Prostate gland (tissue), 2 donors: ENCODE measurements at regions of chr2 and their contacts with region 1.

Region 1: DNA sequence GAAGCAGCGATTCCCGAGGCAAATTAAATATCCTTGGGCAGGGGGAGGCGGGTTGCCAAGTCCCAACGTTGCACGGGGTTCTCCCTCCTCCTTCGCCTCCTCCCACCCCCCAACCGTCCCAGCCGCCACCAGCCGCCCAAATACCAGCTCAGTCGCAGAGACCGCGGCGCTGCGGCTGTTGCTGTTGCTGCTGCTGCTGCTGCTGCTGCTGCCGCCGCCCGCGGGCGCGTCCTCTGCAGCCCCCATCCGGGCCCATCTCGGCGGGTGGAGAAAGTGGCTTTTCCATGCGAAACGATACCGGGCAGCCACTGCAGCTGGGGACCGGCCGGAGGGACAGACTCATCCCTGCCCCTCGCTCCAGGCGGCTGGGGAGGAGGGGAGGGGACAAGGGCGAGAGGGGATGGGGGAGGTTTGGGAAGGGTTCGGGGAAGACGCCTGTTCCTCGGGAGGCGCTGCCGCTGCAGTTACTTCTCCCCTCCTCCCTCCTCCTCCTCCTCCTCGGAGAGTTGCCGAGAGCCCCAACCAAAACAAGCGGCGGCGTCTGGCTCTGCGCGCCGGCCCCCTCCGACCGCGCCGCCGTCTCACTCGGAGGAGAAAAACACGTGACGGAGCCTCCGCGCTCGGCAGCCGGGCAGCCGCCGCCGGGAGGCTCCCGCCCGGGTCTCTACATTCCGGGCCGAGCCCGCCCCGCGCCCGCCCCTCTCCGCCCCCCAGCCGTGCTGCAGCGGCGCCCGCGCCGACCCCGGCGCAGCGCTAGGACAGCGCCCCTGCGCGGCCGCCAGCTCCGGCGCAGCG is at the start of gene IRS1:
- DNase-seq: peak; percentile 70
- H3K4me3 ChIP-seq: peak within 1 kb of the TSS; percentile 52 to 60
- H3K27ac ChIP-seq: peak within 1 kb of the TSS; percentile 92 to 93
- H3K4me1 ChIP-seq: no peaks in the 10 kb centered on the region
- H3K27me3 ChIP-seq: no peaks in the 10 kb centered on the region
- CTCF ChIP-seq: peak in 2 of 4 experiments; percentile 42 to 44
- POLR2A ChIP-seq: peak; percentile 46
- total RNA-seq, gene IRS1: 37.6 to 40.6 TPM

Region 2: DNA sequence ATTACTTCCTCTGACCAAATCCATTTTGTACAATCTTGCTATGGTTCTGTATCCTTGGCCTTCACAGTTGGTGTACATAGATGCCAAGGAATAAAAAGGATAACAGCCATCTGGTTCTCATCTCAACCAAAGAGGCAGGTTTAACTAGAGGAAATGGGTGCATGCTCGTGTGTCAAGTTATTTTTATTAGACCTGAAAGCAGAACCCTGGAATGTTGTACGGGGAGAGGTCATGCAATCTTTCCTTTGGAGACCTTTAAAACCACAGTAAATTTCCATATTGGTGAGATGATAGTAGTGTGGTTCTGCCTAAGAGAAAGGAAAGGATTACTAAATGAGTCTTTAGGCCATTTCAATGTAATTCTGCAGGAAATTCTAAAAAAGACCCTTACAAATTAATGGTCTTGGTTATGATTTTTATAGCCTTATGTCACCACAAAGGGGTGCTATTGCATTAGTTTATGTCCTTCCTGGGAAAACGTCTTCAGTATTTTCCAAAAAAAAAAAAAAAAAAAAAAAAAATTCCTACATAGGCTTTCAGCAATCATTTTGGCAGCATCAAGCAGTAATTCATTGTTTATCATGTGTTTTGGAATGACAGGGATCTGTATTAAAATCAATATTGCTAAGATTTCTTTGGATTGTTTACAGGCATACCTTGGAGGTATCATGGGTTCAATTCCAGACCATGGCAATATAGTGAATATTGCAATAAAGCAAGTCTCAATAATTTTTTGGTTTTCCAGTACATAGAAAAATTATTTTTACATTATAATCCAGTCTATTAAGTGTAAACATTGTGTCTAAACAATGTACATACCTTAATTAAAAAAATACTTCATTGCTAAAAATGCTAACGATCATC is 1129.0 kb before region 1 on chr2:
- intact Hi-C with region 1: loop called (anchors 2 kb)
- DNase-seq: no peak
- H3K4me3 ChIP-seq: no peak overlapping the region
- H3K27ac ChIP-seq: no peak overlapping the region
- H3K4me1 ChIP-seq: no peaks in the 10 kb centered on the region
- H3K27me3 ChIP-seq: no peaks in the 10 kb centered on the region
- CTCF ChIP-seq: peak in 3 of 4 experiments; percentile 35 to 56 (median 36)
- POLR2A ChIP-seq: no peak

Region 3: DNA sequence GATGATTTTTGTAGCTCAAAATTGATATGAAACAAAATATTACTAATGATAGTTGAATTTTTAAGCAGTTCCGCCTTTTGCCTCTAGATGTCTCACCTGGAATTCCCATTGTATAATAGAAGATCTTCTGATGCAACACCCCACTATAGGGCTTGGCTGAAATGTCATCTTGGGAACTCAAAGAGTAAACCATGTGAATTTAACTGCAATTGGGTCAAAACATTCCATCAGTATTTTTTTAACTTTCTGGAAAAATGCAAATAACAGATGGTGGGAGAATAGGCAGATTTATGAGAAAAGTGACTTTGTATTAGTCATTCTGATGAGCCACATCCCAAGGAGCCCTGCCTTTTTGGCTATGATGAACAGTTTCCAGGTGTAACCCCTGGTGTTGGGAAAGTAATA is 909.9 kb before region 1 on chr2:
- intact Hi-C with region 1: loop called (anchors 5 kb)
- DNase-seq: peak; percentile 13
- H3K4me3 ChIP-seq: no peak overlapping the region
- H3K27ac ChIP-seq: no peak overlapping the region
- H3K4me1 ChIP-seq: no peaks in the 10 kb centered on the region
- H3K27me3 ChIP-seq: no peaks in the 10 kb centered on the region
- CTCF ChIP-seq: peak in 3 of 4 experiments; percentile 56 to 86 (median 83)
- POLR2A ChIP-seq: no peak

Region 4: DNA sequence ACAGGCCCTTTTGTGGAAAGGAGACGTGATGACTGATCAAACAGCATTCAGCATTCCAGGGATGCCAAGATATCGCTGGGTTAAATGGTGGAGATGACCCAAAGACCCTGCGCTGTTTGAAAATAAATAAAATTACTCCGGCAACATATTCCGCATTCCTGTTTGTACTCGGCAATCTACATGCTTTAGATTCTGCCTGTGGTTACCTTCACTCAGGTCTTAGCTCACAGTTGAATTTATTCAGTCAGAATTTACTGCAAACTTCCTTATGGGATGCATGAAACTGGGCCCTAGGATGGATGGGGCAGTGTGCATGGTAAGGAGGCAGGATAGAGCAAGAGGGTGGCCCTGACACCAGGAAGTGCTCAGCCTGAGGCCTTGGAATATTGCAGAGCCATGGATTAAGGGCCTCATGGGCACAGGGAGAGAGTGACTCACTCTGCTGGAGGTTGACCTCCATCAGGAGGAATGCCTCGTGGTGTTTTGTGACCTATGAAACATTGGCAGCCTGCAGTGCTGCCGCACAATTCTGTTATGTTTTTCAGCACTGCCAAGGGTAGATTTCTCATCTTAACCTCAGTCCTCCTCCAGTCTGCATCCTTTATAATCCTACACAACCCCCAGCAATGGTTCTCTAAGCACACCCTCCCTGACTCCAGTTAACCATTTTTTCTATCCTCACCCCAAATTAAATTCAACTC is 321.1 kb before region 1 on chr2:
- intact Hi-C with region 1: loop called (anchors 5 kb)
- DNase-seq: no peak
- H3K4me3 ChIP-seq: no peak overlapping the region
- H3K27ac ChIP-seq: peak overlapping the region; percentile 12 to 40
- H3K4me1 ChIP-seq: no peaks in the 10 kb centered on the region
- H3K27me3 ChIP-seq: no peaks in the 10 kb centered on the region
- CTCF ChIP-seq: no peak
- POLR2A ChIP-seq: no peak

Region 5: GRCh38 chr2:226631671-226632070 is 167.7 kb before region 1 on chr2:
- intact Hi-C with region 1: loop called (anchors 5 kb)
- DNase-seq: peak; percentile 65
- H3K4me3 ChIP-seq: no peak overlapping the region
- H3K27ac ChIP-seq: peak overlapping the region; percentile 41 to 45
- H3K4me1 ChIP-seq: no peaks in the 10 kb centered on the region
- H3K27me3 ChIP-seq: no peaks in the 10 kb centered on the region
- CTCF ChIP-seq: no peak
- POLR2A ChIP-seq: no peak

Region 6: GRCh38 chr2:226721541-226721940 is 77.8 kb before region 1 on chr2:
- intact Hi-C with region 1: loop called (anchors 5 kb)
- DNase-seq: no peak
- H3K4me3 ChIP-seq: no peak overlapping the region
- H3K27ac ChIP-seq: no peak overlapping the region
- H3K4me1 ChIP-seq: no peaks in the 10 kb centered on the region
- H3K27me3 ChIP-seq: no peaks in the 10 kb centered on the region
- CTCF ChIP-seq: no peak
- POLR2A ChIP-seq: no peak

Region 7: GRCh38 chr2:226984750-226985582 is 185.6 kb after region 1 on chr2:
- intact Hi-C with region 1: loop called (anchors 5 kb)
- DNase-seq: peak; percentile 61
- H3K4me3 ChIP-seq: no peak overlapping the region
- H3K27ac ChIP-seq: no peak overlapping the region
- H3K4me1 ChIP-seq: no peaks in the 10 kb centered on the region
- H3K27me3 ChIP-seq: no peaks in the 10 kb centered on the region
- CTCF ChIP-seq: peak; percentile 57 to 79 (median 78)
- POLR2A ChIP-seq: no peak